Activated CD4-positive, alpha-beta T cell treated with anti-CD3 and anti-CD28 coated beads, Interleukin-2, amount 10 ng/mL, durations not matched to agents 7 days and 5 days (primary cell): ENCODE measurements at regions of chr18 and their contacts with region 1.

Region 1: DNA sequence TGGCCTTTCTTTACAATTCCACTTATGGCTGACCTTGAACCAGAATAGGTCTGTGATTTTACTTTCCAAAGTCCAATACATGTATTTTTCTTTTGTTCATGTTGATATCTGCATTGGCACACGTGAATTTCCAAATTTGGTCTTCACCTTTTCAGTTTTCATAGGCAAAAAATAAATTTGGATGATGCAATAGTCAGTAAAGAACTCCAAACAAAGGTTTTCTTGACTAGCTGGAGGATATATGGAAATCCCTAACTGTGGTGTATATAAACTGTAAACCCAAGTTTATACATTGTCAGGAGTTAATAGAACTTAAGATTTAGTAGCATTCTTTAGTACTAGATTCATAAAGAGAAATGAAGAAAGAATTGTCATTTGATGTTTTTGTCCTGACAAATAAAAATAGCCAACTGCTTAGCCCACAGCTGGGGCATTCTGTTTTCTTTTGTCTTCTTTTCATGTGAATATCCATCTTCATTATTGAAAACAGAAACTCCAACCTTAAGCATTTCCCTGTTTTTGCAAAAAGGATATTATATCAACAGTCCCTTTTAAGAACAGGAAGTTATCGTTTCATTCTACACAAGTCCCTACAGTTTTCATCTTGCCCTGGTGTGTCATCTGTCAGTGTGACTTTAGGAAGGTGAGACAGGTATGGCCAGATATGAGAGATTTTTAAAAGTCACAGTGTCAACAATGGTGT is 132.9 kb downstream of the BCL2 start:
- DNase-seq: no peak
- H3K4me3 Mint-ChIP-seq: no peak overlapping the region
- H3K27ac Mint-ChIP-seq: no peak overlapping the region
- H3K4me1 Mint-ChIP-seq: peaks cover 72% of the 10 kb centered on the region
- H3K27me3 Mint-ChIP-seq: no peaks in the 10 kb centered on the region

Region 2: GRCh38 chr18:63197224-63197869 is 10.7 kb after region 1 on chr18:
- CTCF ChIA-PET with region 1: interaction called, 10 read pairs
- POLR2A ChIA-PET with region 1: no interaction called
- DNase-seq: peak; percentile 36
- H3K4me3 Mint-ChIP-seq: no peak overlapping the region
- H3K27ac Mint-ChIP-seq: no peak overlapping the region
- H3K4me1 Mint-ChIP-seq: peaks cover 36% of the 10 kb centered on the region
- H3K27me3 Mint-ChIP-seq: no peaks in the 10 kb centered on the region